Gastrocnemius medialis (tissue), 4 donors: ENCODE measurements at regions of chr12 and their contacts with region 1.

Region 1: GRCh38 chr12:55619354-55620138 is 17.1 kb upstream of the OR10P1 start:
- DNase-seq: no peak
- ATAC-seq: peak; percentile 76 to 87
- H3K4me3 ChIP-seq: no peak overlapping the region
- H3K27ac ChIP-seq: no peak overlapping the region
- H3K4me1 ChIP-seq: no peaks in the 10 kb centered on the region
- H3K27me3 ChIP-seq: peaks cover 0 to 4% (median 0%) of the 10 kb centered on the region in 3 donors
- CTCF ChIP-seq: peak; percentile 50 to 73 (median 58)
- POLR2A ChIP-seq: no peak

Region 2: GRCh38 chr12:55188974-55189556 is 430.5 kb before region 1 on chr12:
- in situ Hi-C with region 1: loop called (anchors 10 to 25 kb)
- intact Hi-C with region 1: no loop called
- DNase-seq: no peak
- ATAC-seq: peak; percentile 72 to 77
- H3K4me3 ChIP-seq: no peak overlapping the region
- H3K27ac ChIP-seq: no peak overlapping the region
- H3K4me1 ChIP-seq: no peaks in the 10 kb centered on the region
- H3K27me3 ChIP-seq: no peaks in the 10 kb centered on the region
- CTCF ChIP-seq: peak; percentile 32 to 71 (median 49)
- POLR2A ChIP-seq: no peak

Region 3: GRCh38 chr12:55194382-55194781 is 425.2 kb before region 1 on chr12:
- in situ Hi-C with region 1: loop called (anchors 10 to 25 kb)
- intact Hi-C with region 1: no loop called
- DNase-seq: no peak
- ATAC-seq: no peak
- H3K4me3 ChIP-seq: no peak overlapping the region
- H3K27ac ChIP-seq: no peak overlapping the region
- H3K4me1 ChIP-seq: no peaks in the 10 kb centered on the region
- H3K27me3 ChIP-seq: no peaks in the 10 kb centered on the region
- CTCF ChIP-seq: no peak
- POLR2A ChIP-seq: no peak

Region 4: GRCh38 chr12:55499810-55500252 is 119.7 kb before region 1 on chr12:
- in situ Hi-C with region 1: no loop called
- intact Hi-C with region 1: no loop called
- DNase-seq: no peak
- ATAC-seq: no peak
- H3K4me3 ChIP-seq: no peak overlapping the region
- H3K27ac ChIP-seq: no peak overlapping the region
- H3K4me1 ChIP-seq: no peaks in the 10 kb centered on the region
- H3K27me3 ChIP-seq: no peaks in the 10 kb centered on the region
- CTCF ChIP-seq: no peak
- POLR2A ChIP-seq: no peak

Region 5: GRCh38 chr12:55659486-55660385 is 40.2 kb after region 1 on chr12:
- in situ Hi-C with region 1: no loop called
- intact Hi-C with region 1: no loop called
- DNase-seq: peak; percentile 41 to 49
- ATAC-seq: peak; percentile 83 to 85
- H3K4me3 ChIP-seq: no peak overlapping the region
- H3K27ac ChIP-seq: peak overlapping the region; percentile 78 to 84 (median 82)
- H3K4me1 ChIP-seq: peaks cover 15 to 22% of the 10 kb centered on the region in 2 donors
- H3K27me3 ChIP-seq: no peaks in the 10 kb centered on the region
- CTCF ChIP-seq: peak in 2 of 5 experiments; percentile 27 to 47
- POLR2A ChIP-seq: no peak